HCT116 (cell line): ENCODE measurements at regions of chr17 and their contacts with region 1.

Region 1: GRCh38 chr17:57783106-57783742 is 38.1 kb upstream of the CCDC182 start:
- DNase-seq: peak; percentile 18
- ATAC-seq: peak; percentile 98
- H3K4me3 ChIP-seq: peak overlapping the region in 1 of 2 experiments; percentile 13; a peak in 1 of 4 replicates
- H3K27ac ChIP-seq: no peak overlapping the region
- H3K4me1 ChIP-seq: peaks cover 7 to 11% of the 10 kb centered on the region in 2 experiments; a peak in 2 of 4 replicates
- H3K27me3 ChIP-seq: peaks cover 20% of the 10 kb centered on the region
- CTCF ChIP-seq: peak; percentile 78 to 100 (median 99)
- POLR2A ChIP-seq: no peak
- RAD21 ChIP-seq: peak; percentile 83

Region 2: DNA sequence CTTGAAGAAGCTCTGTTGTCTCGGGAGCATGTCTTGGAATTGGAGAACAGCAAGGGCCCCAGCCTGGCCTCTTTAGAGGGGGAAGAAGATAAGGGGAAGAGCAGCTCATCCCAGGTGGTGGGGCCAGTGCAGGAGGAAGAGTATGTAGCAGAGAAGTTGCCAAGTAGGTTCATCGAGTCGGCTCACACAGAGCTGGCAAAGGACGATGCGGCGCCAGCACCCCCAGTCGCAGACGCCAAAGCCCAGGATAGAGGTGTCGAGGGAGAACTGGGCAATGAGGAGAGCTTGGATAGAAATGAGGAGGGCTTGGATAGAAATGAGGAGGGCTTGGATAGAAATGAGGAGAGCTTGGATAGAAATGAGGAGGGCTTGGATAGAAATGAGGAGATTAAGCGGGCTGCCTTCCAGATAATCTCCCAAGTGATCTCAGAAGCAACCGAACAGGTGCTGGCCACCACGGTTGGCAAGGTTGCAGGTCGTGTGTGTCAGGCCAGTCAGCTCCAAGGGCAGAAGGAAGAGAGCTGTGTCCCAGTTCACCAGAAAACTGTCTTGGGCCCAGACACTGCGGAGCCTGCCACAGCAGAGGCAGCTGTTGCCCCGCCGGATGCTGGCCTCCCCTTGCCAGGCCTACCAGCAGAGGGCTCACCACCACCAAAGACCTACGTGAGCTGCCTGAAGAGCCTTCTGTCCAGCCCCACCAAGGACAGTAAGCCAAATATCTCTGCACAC is 677.0 kb before region 1 on chr17:
- CTCF ChIA-PET with region 1: interaction called, 12 read pairs
- POLR2A ChIA-PET with region 1: no interaction called
- RAD21 ChIA-PET with region 1: no interaction called
- intact Hi-C with region 1: no loop called
- DNase-seq: peak; percentile 64
- ATAC-seq: peak; percentile 71
- H3K4me3 ChIP-seq: peak overlapping the region in 1 of 2 experiments; percentile 52; a peak in 1 of 4 replicates
- H3K27ac ChIP-seq: peak overlapping the region; percentile 89
- H3K4me1 ChIP-seq: peaks cover 63 to 71% of the 10 kb centered on the region in 2 experiments
- H3K27me3 ChIP-seq: no peaks in the 10 kb centered on the region
- CTCF ChIP-seq: peak; percentile 61 to 96 (median 81); a peak in 5 of 6 replicates
- POLR2A ChIP-seq: no peak
- RAD21 ChIP-seq: peak; percentile 61

Region 3: DNA sequence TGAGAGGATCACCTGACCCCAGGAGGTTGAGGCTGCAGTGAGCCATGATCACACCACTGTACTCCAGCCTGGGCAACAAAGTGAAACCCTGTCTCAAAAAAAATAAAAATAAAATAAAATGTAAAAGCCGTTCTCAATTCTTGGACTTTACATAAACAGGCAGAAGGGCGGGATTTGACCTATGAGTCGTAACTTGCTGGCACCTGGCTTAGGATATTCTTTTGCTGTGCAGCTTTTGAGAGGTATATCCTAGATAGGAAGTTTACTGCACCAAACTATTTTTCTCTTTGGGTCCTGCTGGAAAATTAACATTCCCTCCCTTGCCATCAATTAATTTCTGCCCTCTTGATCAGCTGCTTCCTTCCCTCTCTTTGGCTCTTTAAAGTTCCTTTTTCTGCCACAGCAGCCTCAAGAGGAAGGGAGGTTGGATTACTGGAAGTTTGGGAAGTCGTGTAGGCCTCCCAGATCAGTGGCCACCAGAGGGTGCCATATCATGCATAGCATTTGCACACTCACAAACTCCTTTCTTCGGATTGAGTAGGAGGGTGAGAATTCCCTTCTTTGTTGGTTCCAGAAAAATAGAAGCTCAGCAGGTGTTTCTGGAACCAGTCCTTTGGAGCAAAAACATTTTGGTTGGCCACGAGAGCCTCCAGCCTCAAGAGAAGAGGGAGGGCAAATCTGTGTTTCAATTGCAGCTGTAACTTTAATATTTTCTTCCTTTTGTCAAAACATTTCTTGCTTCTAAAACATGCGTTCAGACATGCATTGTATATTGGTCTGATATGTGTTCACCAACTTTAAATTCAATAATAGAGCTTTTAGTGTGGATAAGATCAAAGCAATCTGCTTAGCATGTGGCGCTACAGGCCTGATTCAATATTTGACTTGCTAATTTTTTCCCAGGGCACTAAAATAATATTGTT is 185.4 kb before region 1 on chr17:
- CTCF ChIA-PET with region 1: interaction called, 11 read pairs
- POLR2A ChIA-PET with region 1: no interaction called
- RAD21 ChIA-PET with region 1: no interaction called
- intact Hi-C with region 1: no loop called
- DNase-seq: peak; percentile 65
- ATAC-seq: peak; percentile 91
- H3K4me3 ChIP-seq: no peak overlapping the region
- H3K27ac ChIP-seq: peak overlapping the region; percentile 37; the same call in 1 of the 2 replicates
- H3K4me1 ChIP-seq: peaks cover 5 to 13% of the 10 kb centered on the region in 2 experiments; a peak in 3 of 4 replicates
- H3K27me3 ChIP-seq: no peaks in the 10 kb centered on the region
- CTCF ChIP-seq: peak; percentile 93 to 98 (median 98)
- POLR2A ChIP-seq: no peak
- RAD21 ChIP-seq: peak; percentile 80

Region 4: GRCh38 chr17:57772774-57773173 is 10.4 kb before region 1 on chr17:
- CTCF ChIA-PET with region 1: interaction called, 15 read pairs
- POLR2A ChIA-PET with region 1: no interaction called
- RAD21 ChIA-PET with region 1: no interaction called
- intact Hi-C with region 1: no loop called
- DNase-seq: no peak
- ATAC-seq: peak; percentile 65
- H3K4me3 ChIP-seq: no peak overlapping the region
- H3K27ac ChIP-seq: no peak overlapping the region
- H3K4me1 ChIP-seq: no peaks in the 10 kb centered on the region
- H3K27me3 ChIP-seq: peaks cover 84% of the 10 kb centered on the region
- CTCF ChIP-seq: peak in 1 of 3 experiments; percentile 3; a peak in 2 of 6 replicates
- POLR2A ChIP-seq: no peak
- RAD21 ChIP-seq: peak; percentile 43; the same call in 1 of the 2 replicates

Region 5: GRCh38 chr17:57794841-57795240 is 11.6 kb after region 1 on chr17:
- CTCF ChIA-PET with region 1: interaction called, 24 read pairs
- POLR2A ChIA-PET with region 1: no interaction called
- RAD21 ChIA-PET with region 1: no interaction called
- intact Hi-C with region 1: no loop called
- DNase-seq: no peak
- ATAC-seq: no peak
- H3K4me3 ChIP-seq: no peak overlapping the region
- H3K27ac ChIP-seq: no peak overlapping the region
- H3K4me1 ChIP-seq: no peaks in the 10 kb centered on the region
- H3K27me3 ChIP-seq: peaks cover 6% of the 10 kb centered on the region; the same call in 1 of the 2 replicates
- CTCF ChIP-seq: no peak
- POLR2A ChIP-seq: no peak
- RAD21 ChIP-seq: no peak

Region 6: GRCh38 chr17:58254803-58255388 is 471.7 kb after region 1 on chr17:
- CTCF ChIA-PET with region 1: no interaction called
- POLR2A ChIA-PET with region 1: no interaction called
- RAD21 ChIA-PET with region 1: no interaction called
- intact Hi-C with region 1: no loop called
- DNase-seq: peak; percentile 22
- ATAC-seq: peak; percentile 95
- H3K4me3 ChIP-seq: no peak overlapping the region
- H3K27ac ChIP-seq: no peak overlapping the region
- H3K4me1 ChIP-seq: peaks cover 0 to 6% of the 10 kb centered on the region in 2 experiments; a peak in 2 of 4 replicates
- H3K27me3 ChIP-seq: peaks cover 21% of the 10 kb centered on the region
- CTCF ChIP-seq: peak; percentile 50 to 90 (median 76); a peak in 5 of 6 replicates
- POLR2A ChIP-seq: no peak
- RAD21 ChIP-seq: peak; percentile 45